ENCODE measurements at regions of chr11 and their contacts with region 1.

Region 1: DNA sequence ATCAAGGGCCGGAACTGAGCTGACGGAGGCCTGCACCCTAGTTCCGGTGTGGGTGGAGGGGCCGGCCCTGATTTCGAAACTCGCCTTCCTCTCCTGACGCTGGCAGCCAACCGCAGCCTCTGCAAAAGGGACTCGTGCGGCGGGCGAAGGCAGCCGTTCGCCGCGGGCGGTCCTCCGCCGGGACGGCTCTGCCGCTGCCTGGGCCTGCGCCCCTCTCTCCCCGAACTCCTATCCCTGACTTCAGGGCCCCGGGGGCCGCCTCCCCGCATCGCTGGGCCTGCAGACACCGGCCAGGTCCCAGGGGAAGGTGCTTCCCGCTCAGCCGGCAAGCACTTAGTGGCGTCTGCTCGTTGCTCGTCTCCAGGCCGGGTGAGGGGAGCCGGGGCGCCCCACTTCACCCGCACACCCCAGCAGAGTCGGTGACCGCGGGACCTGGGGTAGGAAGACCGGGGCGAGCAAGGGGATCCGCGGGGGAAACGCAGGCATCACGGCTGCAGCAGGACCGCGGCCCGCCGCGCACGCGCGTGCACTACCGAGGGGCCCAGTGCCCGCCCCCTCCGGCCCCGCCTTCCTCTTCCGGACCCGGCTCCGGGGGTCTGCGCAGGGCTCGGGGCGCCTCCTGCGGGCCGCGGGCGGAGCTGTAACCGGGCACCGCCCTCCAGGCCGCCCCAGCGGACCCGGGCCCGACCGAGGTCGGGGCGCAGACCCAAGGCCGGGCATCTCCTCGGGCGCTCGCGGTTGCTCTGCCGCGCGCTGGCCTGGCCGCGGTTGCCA is 464 bp upstream of the ANKRD13D start:
- DNase-seq: peak; percentile 95
- ATAC-seq: peak; percentile 62
- H3K4me3 Mint-ChIP-seq: peak overlapping the region; percentile 64
- H3K27ac Mint-ChIP-seq: peak overlapping the region; percentile 97
- H3K4me1 Mint-ChIP-seq: peaks cover 56% of the 10 kb centered on the region
- H3K27me3 Mint-ChIP-seq: no peaks in the 10 kb centered on the region

Region 2: DNA sequence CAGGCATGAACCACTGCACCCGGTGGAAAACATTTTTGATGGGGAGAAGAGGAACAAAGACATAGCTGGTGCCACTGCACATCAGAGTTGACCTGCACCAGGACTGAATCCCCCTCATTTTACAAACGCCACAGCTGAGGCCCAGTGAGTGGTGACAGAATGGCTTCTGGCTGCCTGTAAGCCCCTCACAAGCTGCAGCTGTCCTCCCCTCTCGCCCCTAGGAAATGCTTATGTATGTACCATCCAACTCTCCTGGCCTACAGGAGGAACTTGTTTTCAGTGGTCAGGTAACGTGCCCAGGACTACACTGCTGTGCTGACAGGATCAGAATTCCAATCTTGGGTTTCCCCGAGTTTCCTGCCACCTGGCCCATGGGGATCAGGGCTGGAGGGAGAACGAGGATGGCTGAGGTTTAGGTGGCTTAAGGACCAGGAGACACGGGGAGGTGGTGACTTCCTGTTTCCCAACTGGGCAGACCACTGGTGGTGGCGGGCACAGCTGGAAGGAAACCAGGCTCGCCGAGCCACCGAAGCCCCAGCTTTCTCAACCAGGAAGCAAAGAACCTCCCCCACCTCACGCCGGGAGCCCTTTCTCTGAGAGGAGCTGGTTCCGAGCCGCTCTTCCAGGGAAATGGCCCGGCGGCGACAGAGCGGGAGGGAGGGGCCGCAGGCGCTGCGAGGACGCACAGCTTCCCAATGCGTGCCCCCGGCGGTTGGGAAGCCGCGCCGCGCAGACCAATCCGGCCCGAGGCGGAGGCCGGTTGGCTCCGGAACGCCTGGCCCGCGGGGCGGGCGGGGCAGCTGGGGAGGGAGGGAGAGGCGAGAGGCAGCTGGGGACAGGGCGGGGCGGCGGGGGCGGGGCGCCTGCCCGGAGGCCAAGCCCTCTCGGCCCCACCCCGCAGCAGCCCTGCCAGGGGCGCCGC is 432.8 kb before region 1 on chr11:
- CTCF ChIA-PET with region 1: no interaction called
- POLR2A ChIA-PET with region 1: no interaction called
- intact Hi-C with region 1: loop called in 1 of 2 experiments (anchors 2 kb)
- DNase-seq: peak; percentile 94
- ATAC-seq: peak; percentile 83
- H3K4me3 Mint-ChIP-seq: peak overlapping the region; percentile 82
- H3K27ac Mint-ChIP-seq: peak overlapping the region; percentile 73
- H3K4me1 Mint-ChIP-seq: peaks cover 11% of the 10 kb centered on the region
- H3K27me3 Mint-ChIP-seq: no peaks in the 10 kb centered on the region

Region 3: GRCh38 chr11:67239783-67240575 is 48.7 kb before region 1 on chr11:
- CTCF ChIA-PET with region 1: interaction called, 5 read pairs
- POLR2A ChIA-PET with region 1: interaction called, 4 read pairs
- intact Hi-C with region 1: loop called in 1 of 2 experiments (anchors 1 kb)
- DNase-seq: peak; percentile 98
- ATAC-seq: peak; percentile 94
- H3K4me3 Mint-ChIP-seq: peak overlapping the region; percentile 98
- H3K27ac Mint-ChIP-seq: peak overlapping the region; percentile 99
- H3K4me1 Mint-ChIP-seq: peaks cover 43% of the 10 kb centered on the region
- H3K27me3 Mint-ChIP-seq: no peaks in the 10 kb centered on the region

Region 4: DNA sequence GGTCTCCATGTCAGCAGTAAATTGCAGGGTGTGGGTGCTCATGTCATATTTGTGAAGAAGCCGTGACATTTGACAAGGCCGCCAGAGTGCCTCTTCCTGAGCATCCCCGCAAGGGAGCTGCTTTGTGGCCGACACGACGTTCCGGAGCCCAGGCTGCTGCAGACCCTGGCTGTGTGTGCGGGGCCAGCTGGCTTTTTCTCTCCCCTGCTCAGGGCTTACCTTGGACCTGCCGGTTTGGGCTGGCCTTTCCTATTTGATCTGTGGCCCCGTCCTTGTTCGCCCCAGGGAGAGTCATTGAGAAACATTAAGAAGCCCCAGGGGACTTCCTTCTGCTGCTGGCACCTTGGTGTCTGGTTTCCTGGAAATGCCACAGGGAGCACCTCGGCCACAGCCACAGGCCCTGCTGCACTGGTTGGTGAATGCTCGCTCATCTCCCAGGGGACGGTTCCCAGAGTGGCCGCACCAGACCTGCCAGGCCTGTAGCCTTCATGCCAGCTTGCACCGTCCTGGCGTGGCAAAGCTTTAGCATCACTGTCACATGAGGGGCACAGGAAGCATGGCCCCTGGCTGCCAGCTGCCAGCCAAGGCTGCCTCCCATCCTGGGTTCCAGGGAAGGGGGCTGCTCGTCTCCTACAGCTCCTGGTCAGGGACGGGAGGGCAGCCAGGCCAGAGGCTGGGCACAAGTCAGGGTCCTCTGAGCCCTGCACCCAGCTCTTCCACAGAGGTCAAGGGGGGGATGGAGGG is 16.9 kb before region 1 on chr11:
- CTCF ChIA-PET with region 1: interaction called, 10 read pairs
- POLR2A ChIA-PET with region 1: interaction called, 16 read pairs
- intact Hi-C with region 1: loop called (anchors 1 kb)
- DNase-seq: peak; percentile 85
- ATAC-seq: peak; percentile 31
- H3K4me3 Mint-ChIP-seq: peak overlapping the region; percentile 98
- H3K27ac Mint-ChIP-seq: peak overlapping the region; percentile 99
- H3K4me1 Mint-ChIP-seq: peaks cover 82% of the 10 kb centered on the region
- H3K27me3 Mint-ChIP-seq: no peaks in the 10 kb centered on the region

Region 5: DNA sequence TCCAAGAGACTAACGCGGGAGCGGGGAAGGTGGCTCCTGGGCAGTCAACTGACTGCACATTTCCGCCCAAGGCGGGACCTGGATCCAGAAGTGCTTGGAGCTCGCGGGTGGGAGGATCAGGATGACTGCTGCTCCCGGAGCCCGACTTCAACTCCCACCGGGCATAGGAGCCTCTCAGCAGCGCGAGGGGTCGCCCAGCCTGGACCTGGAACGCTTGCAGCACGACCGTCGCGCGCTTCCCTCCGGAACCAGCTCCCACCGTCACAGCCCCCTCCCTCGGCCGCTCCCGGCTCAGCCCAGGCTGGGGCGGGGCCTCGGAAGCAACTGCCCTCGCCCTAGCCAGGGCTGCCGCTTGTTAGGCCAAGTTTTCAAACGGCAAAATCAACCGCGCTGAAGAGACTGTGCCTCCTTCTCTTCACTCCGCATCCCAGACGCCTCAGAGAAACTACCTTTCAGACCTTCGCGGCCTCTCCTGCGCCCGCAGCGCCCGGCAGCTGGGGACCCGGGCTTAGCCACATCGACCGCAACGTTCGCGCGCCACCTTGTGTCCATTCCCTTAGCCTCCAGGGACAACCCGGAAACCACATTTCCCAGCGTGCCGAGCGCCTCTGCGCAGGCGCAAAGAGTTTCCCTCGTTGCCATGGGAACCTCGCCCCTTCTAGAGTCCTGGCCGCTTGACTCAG is 28.7 kb after region 1 on chr11:
- CTCF ChIA-PET with region 1: interaction called, 9 read pairs
- POLR2A ChIA-PET with region 1: interaction called, 9 read pairs
- intact Hi-C with region 1: loop called (anchors 1 to 2 kb)
- DNase-seq: peak; percentile 99
- ATAC-seq: peak; percentile 83
- H3K4me3 Mint-ChIP-seq: peak overlapping the region; percentile 84
- H3K27ac Mint-ChIP-seq: peak overlapping the region; percentile 95
- H3K4me1 Mint-ChIP-seq: peaks cover 28% of the 10 kb centered on the region
- H3K27me3 Mint-ChIP-seq: peaks cover 3% of the 10 kb centered on the region

Region 6: GRCh38 chr11:67428052-67428914 is 139.6 kb after region 1 on chr11 and contains the start of gene RPS6KB2:
- CTCF ChIA-PET with region 1: no interaction called
- POLR2A ChIA-PET with region 1: no interaction called
- intact Hi-C with region 1: loop called in 1 of 2 experiments (anchors 2 kb)
- DNase-seq: peak; percentile 99
- ATAC-seq: peak; percentile 81
- H3K4me3 Mint-ChIP-seq: peak within 1 kb of the TSS; percentile 90
- H3K27ac Mint-ChIP-seq: peak within 1 kb of the TSS; percentile 98
- H3K4me1 Mint-ChIP-seq: peaks cover 37% of the 10 kb centered on the region
- H3K27me3 Mint-ChIP-seq: no peaks in the 10 kb centered on the region
- total RNA-seq, gene RPS6KB2: 53.4 to 57.2 TPM

Region 7: GRCh38 chr11:67482825-67483798 is 194.5 kb after region 1 on chr11 and contains the start of gene AIP:
- CTCF ChIA-PET with region 1: no interaction called
- POLR2A ChIA-PET with region 1: no interaction called
- intact Hi-C with region 1: loop called in 1 of 2 experiments (anchors 5 kb)
- DNase-seq: peak; percentile 99
- ATAC-seq: peak; percentile 72
- H3K4me3 Mint-ChIP-seq: peak within 1 kb of the TSS; percentile 86
- H3K27ac Mint-ChIP-seq: peak within 1 kb of the TSS; percentile 99
- H3K4me1 Mint-ChIP-seq: peaks cover 50% of the 10 kb centered on the region
- H3K27me3 Mint-ChIP-seq: no peaks in the 10 kb centered on the region
- total RNA-seq, gene AIP: 142 to 144 TPM